MCF 10A (cell line): ENCODE measurements at regions of chr1 and their contacts with region 1.

Region 1: GRCh38 chr1:214632091-214632490 is 29.1 kb downstream of the CENPF start:
- DNase-seq: no peak
- H3K4me3 Mint-ChIP-seq: no peak overlapping the region
- H3K27ac Mint-ChIP-seq: peak overlapping the region; percentile 66
- H3K4me1 Mint-ChIP-seq: peaks cover 4% of the 10 kb centered on the region
- H3K27me3 Mint-ChIP-seq: no peaks in the 10 kb centered on the region
- CTCF ChIP-seq: no peak

Region 2: DNA sequence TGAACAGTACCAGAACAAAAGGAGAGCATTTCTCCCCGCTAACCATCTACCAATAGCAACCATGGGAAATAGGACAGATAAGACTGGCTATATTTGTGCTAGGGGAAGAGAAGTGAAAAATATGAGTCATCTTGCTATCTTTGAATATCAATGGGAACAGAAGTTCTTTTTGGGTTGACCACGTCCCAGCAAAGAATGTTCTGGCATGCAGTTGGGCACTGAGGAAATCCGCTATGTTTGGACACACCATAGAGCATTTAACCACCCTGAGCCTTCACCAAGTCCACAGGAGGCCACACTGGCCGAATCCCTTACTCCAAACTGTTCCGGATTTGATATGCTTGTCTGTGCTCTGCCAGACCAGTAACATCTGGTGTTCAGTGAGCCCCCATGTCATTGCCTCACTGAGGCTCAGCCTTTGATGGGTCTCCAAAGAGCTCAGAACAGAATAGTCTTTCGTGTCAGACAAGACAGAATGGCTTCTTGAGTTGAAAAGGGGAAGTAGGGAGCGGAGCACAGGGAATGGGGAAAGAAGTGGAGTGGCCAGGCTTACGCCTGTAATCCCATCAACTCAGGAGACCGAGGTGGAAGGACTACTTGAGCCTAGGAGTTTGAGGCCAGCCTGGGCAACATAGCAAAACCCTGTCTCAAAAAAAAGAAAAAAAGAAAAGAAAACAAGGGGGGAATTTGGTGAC is 269.8 kb before region 1 on chr1:
- CTCF ChIA-PET with region 1: interaction called, 10 read pairs
- POLR2A ChIA-PET with region 1: no interaction called
- intact Hi-C with region 1: no loop called
- DNase-seq: no peak
- H3K4me3 Mint-ChIP-seq: no peak overlapping the region
- H3K27ac Mint-ChIP-seq: peak overlapping the region; percentile 50
- H3K4me1 Mint-ChIP-seq: peaks cover 6% of the 10 kb centered on the region
- H3K27me3 Mint-ChIP-seq: no peaks in the 10 kb centered on the region
- CTCF ChIP-seq: no peak

Region 3: DNA sequence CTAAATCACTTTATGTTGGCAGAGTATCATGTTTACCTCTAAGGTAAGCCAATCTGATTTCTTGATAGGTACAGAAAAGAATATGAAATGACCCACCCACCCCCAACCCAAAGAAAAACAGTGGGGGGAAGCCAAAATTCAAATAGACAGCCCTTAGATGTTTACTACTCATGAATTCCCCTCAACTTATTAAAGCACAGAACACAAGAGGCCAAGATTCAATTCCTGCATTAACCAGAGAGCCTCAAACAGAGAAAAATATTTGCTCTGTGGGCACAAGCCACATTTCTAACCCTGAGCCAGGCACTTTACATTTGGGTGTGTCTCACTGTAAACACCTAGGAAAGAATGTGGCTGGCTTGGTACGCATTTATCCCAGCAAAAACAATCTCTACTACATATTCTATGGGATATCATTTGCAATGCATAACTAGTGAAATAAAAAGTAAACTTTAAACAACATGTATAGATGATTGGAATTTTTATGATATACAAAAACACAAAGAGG is 165.0 kb before region 1 on chr1:
- CTCF ChIA-PET with region 1: no interaction called
- POLR2A ChIA-PET with region 1: no interaction called
- intact Hi-C with region 1: no loop called
- DNase-seq: peak; percentile 64
- H3K4me3 Mint-ChIP-seq: peak overlapping the region; percentile 37
- H3K27ac Mint-ChIP-seq: peak overlapping the region; percentile 88
- H3K4me1 Mint-ChIP-seq: peaks cover 65% of the 10 kb centered on the region
- H3K27me3 Mint-ChIP-seq: no peaks in the 10 kb centered on the region
- CTCF ChIP-seq: no peak

Region 4: DNA sequence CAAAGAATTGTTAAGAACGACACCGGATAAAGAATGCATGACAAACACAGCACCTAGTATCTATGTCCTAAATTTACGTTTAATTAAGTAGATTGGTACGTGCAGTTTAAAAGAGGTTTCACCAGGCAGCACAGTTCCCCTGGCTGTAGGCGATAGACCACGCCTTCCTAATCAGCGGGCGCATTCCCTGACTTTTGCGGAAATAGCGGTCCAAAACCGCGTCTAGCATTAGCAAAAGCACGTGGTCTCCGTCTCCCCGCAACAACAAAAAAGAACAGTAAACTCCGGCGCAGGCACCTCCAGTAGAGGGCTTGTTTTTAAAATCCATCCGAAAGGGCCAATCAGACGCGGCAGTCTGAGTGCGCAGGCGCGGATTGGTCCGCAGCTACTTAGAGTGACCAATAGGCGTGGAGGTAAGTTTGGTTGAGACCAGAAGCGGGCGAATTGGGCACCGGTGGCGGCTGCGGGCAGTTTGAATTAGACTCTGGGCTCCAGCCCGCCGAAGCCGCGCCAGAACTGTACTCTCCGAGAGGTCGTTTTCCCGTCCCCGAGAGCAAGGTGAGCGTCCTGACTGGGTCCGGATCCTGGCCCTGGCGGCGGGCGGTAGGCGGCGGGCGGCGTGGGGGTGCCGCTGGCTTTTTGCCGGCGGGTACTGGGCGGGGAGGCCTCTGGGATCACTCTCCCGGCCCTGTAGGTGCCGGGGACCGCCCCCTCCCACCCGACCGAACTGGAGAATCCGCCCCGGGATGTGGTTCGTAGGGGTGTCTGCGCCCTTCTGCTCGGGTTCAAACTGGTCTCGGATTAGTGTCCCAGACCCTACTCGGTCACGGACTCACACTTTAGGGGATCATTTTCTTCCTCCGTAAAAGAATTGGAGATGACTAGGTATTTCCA is 29.1 kb before region 1 on chr1 and contains the start of gene CENPF:
- CTCF ChIA-PET with region 1: interaction called, 196 read pairs
- POLR2A ChIA-PET with region 1: interaction called, 10 read pairs
- intact Hi-C with region 1: no loop called
- DNase-seq: peak; percentile 100
- H3K4me3 Mint-ChIP-seq: peak within 1 kb of the TSS; percentile 96
- H3K27ac Mint-ChIP-seq: peak within 1 kb of the TSS; percentile 94
- H3K4me1 Mint-ChIP-seq: peaks cover 16% of the 10 kb centered on the region
- H3K27me3 Mint-ChIP-seq: no peaks in the 10 kb centered on the region
- CTCF ChIP-seq: peak; percentile 28
- total RNA-seq, gene CENPF: 88.8 and 135 TPM in 2 replicates

Region 5: DNA sequence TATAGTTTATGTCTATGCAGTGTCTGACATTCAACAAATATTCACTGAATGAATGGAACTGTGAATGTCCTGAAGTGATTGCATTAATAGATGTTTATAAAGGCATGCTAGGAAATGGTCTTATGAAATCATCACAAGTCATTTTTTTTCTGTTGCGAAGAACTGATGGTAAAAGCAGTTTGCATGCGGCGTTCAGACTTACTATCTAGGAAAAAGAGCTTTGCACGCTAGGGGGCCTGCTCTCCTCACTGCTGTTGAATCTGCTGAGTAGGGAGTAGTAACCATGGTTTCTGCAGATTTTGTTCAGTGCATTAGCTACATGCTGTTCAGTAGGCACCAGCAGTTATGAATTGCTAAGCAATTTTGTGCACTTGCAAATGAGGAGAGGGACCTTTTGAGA is 28.8 kb after region 1 on chr1:
- CTCF ChIA-PET with region 1: interaction called, 133 read pairs
- POLR2A ChIA-PET with region 1: no interaction called
- intact Hi-C with region 1: no loop called
- DNase-seq: peak; percentile 42
- H3K4me3 Mint-ChIP-seq: no peak overlapping the region
- H3K27ac Mint-ChIP-seq: no peak overlapping the region
- H3K4me1 Mint-ChIP-seq: peaks cover 13% of the 10 kb centered on the region
- H3K27me3 Mint-ChIP-seq: no peaks in the 10 kb centered on the region
- CTCF ChIP-seq: peak; percentile 82

Region 6: GRCh38 chr1:215526553-215527151 is 894.6 kb after region 1 on chr1:
- CTCF ChIA-PET with region 1: interaction called, 162 read pairs
- POLR2A ChIA-PET with region 1: interaction called, 3 read pairs
- intact Hi-C with region 1: loop called (anchors 1 kb)
- DNase-seq: peak; percentile 80
- H3K4me3 Mint-ChIP-seq: no peak overlapping the region
- H3K27ac Mint-ChIP-seq: no peak overlapping the region
- H3K4me1 Mint-ChIP-seq: peaks cover 12% of the 10 kb centered on the region
- H3K27me3 Mint-ChIP-seq: no peaks in the 10 kb centered on the region
- CTCF ChIP-seq: peak; percentile 86